Esophagus muscularis mucosa (tissue), 4 donors: ENCODE measurements at regions of chr9 and their contacts with region 1.

Region 1: GRCh38 chr9:69971643-69972449 is 71.8 kb upstream of the MAMDC2 start:
- DNase-seq: no peak
- H3K4me3 ChIP-seq: peak overlapping the region in 1 of 4 donors; percentile 11
- H3K27ac ChIP-seq: peak overlapping the region in 2 of 4 donors; percentile 12 to 31
- H3K4me1 ChIP-seq: peaks cover 0 to 31% (median 13%) of the 10 kb centered on the region in 4 donors
- H3K27me3 ChIP-seq: no peaks in the 10 kb centered on the region
- CTCF ChIP-seq: peak; percentile 88 to 91 (median 89)
- EP300 ChIP-seq: no peak
- POLR2A ChIP-seq: no peak

Region 2: GRCh38 chr9:70043689-70044489 is 72.0 kb after region 1 on chr9 and contains the start of gene MAMDC2:
- intact Hi-C with region 1: loop called (anchors 5 kb)
- DNase-seq: peak; percentile 92
- H3K4me3 ChIP-seq: peak within 1 kb of the TSS; percentile 75 to 85 (median 78)
- H3K27ac ChIP-seq: peak within 1 kb of the TSS; percentile 91 to 96 (median 94)
- H3K4me1 ChIP-seq: peaks cover 35 to 90% (median 77%) of the 10 kb centered on the region in 4 donors
- H3K27me3 ChIP-seq: no peaks in the 10 kb centered on the region
- CTCF ChIP-seq: no peak
- EP300 ChIP-seq: no peak
- POLR2A ChIP-seq: peak; percentile 25
- total RNA-seq, gene MAMDC2: 115 to 147 (median 126) TPM

Region 3: DNA sequence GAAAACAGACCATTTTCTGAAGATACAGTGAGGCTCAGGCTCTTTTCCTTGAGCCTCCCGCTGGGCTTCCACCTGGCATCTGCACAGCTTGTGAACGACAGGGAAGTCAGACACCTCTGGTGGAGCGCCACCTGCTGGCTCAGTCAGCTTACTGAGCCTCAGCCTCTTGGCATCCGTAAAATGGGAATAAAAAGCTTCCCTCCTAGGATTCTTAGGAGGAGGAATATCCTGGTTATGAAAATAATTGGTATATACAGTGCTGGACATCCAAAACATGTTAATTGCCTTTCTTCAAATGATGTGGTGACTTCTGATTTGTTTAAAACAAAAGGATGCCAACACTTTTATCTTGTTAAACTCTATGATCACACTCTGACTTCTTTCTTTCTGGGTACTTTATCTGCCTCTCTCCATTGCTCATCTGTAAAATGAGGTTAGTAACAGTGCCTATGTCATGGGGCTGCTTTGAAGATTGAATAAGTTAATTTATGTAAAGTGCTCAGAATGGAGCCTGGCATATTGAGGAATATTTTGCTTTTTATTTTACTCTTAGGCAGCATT is 139.3 kb after region 1 on chr9:
- intact Hi-C with region 1: loop called (anchors 1 kb)
- DNase-seq: peak; percentile 94
- H3K4me3 ChIP-seq: no peak overlapping the region
- H3K27ac ChIP-seq: peak overlapping the region; percentile 40 to 71 (median 66)
- H3K4me1 ChIP-seq: peaks cover 10 to 75% (median 69%) of the 10 kb centered on the region in 4 donors
- H3K27me3 ChIP-seq: no peaks in the 10 kb centered on the region
- CTCF ChIP-seq: peak; percentile 90 to 95 (median 93)
- EP300 ChIP-seq: no peak
- POLR2A ChIP-seq: no peak